K562 (cell line): ENCODE measurements at regions of chr14 and their contacts with region 1.

Region 1: DNA sequence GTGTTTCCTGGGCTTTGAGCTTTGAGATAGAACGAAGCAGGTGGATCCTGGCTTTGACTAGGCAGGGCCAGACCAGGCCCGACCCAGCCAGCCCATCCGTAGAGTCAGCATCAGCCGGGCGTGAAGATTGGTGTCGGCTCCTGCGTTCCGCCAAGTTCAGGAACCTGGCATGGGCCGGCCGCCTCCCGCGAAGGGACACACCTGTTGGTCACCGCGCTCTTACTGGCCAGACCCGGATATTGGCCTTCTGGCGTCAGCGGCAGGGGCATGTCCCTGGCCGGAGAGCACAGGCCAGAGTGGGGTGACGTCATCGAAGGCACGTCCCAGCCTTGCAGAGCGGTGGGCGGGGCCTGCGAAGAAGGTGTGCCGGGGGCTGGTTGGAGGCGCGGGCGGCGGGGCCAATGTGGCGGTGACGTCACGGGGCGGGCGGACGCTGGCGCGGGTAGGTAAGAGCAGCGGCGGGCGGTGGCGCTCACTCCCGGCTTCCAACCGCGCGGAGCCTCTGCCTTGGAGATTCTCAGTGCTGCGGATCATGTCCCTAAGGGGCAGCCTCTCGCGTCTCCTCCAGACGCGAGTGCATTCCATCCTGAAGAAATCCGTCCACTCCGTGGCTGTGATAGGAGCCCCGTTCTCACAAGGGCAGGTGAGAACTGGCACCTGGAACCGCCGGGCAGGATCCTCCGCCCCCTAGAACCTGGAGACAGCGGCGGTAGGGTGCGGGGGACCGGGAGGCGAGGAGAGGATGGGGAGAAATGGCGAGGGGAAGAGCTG is at the start of gene ARG2:
- DNase-seq: peak; percentile 94 to 96 (median 96)
- ATAC-seq: peak; percentile 94
- H3K4me3 ChIP-seq: peak within 1 kb of the TSS; percentile 78
- H3K27ac ChIP-seq: peak within 1 kb of the TSS; percentile 73
- H3K4me1 ChIP-seq: peaks cover 14 to 25% of the 10 kb centered on the region in 2 experiments; a peak in 4 of 5 replicates
- H3K27me3 ChIP-seq: no peaks in the 10 kb centered on the region
- CTCF ChIP-seq: peak in 2 of 3 experiments; percentile 34 to 46; a peak in 3 of 6 replicates
- EP300 ChIP-seq: no peak
- POLR2A ChIP-seq: peak; percentile 74
- RAD21 ChIP-seq: peak; percentile 24 to 48; a peak in 2 of 4 replicates
- polyA plus RNA-seq, gene ARG2: 23.2 to 26.7 TPM

Region 2: GRCh38 chr14:67636361-67636919 is 16.8 kb after region 1 on chr14:
- CTCF ChIA-PET with region 1: no interaction called
- POLR2A ChIA-PET with region 1: interaction called, 5 read pairs
- in situ Hi-C with region 1: no loop called
- intact Hi-C with region 1: loop called (anchors 2 kb)
- DNase-seq: peak; percentile 41 to 79 (median 60)
- ATAC-seq: peak; percentile 97
- H3K4me3 ChIP-seq: no peak overlapping the region
- H3K27ac ChIP-seq: peak overlapping the region; percentile 81; the same call in 2 of the 3 replicates
- H3K4me1 ChIP-seq: peaks cover 0 to 34% of the 10 kb centered on the region in 2 experiments; a peak in 3 of 5 replicates
- H3K27me3 ChIP-seq: no peaks in the 10 kb centered on the region
- CTCF ChIP-seq: no peak
- EP300 ChIP-seq: peak; percentile 100
- POLR2A ChIP-seq: no peak
- RAD21 ChIP-seq: peak in 1 of 2 experiments; percentile 54; a peak in 2 of 4 replicates